ENCODE measurements at regions of chr2 and their contacts with region 1.

Region 1: DNA sequence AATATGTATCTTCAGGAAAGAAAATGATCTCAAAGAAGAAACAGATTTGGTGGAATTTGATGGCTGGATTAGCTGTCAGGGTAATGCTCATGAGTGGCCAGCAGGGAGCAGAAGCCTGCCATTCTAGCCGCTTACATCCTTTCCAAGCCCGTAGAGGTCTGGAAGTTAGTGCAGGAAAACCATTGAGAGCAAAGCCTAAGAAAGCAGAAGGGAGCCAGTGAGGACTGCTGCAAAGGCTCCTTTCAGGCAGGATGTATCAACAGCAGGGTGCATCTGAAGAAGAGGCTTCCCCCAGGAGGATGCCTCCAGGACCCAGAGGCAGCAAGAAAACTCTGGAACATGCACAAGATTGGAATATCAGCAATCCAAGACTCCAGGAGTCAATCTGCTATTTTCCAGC is 22.9 kb upstream of the LBH start:
- DNase-seq: peak; percentile 67
- ATAC-seq: peak; percentile 62
- H3K4me3 ChIP-seq: no peak overlapping the region
- H3K4me3 Mint-ChIP-seq: no peak overlapping the region
- H3K27ac ChIP-seq: no peak overlapping the region
- H3K27ac Mint-ChIP-seq: peak overlapping the region; percentile 22
- H3K4me1 ChIP-seq: peaks cover 9 to 18% of the 10 kb centered on the region in 2 donors
- H3K4me1 Mint-ChIP-seq: peaks cover 16% of the 10 kb centered on the region
- H3K27me3 ChIP-seq: no peaks in the 10 kb centered on the region
- H3K27me3 Mint-ChIP-seq: no peaks in the 10 kb centered on the region
- CTCF ChIP-seq: peak; percentile 88

Region 2: GRCh38 chr2:29966266-29966665 is 242.2 kb before region 1 on chr2:
- CTCF ChIA-PET with region 1: no interaction called
- POLR2A ChIA-PET with region 1: no interaction called
- intact Hi-C with region 1: no loop called
- DNase-seq: no peak
- ATAC-seq: no peak
- H3K4me3 ChIP-seq: no peak overlapping the region
- H3K4me3 Mint-ChIP-seq: no peak overlapping the region
- H3K27ac ChIP-seq: no peak overlapping the region
- H3K27ac Mint-ChIP-seq: no peak overlapping the region
- H3K4me1 ChIP-seq: no peaks in the 10 kb centered on the region
- H3K4me1 Mint-ChIP-seq: no peaks in the 10 kb centered on the region
- H3K27me3 ChIP-seq: peaks cover 0 to 11% (median 2%) of the 10 kb centered on the region in 4 experiments
- H3K27me3 Mint-ChIP-seq: peaks cover 18% of the 10 kb centered on the region
- CTCF ChIP-seq: no peak

Region 3: DNA sequence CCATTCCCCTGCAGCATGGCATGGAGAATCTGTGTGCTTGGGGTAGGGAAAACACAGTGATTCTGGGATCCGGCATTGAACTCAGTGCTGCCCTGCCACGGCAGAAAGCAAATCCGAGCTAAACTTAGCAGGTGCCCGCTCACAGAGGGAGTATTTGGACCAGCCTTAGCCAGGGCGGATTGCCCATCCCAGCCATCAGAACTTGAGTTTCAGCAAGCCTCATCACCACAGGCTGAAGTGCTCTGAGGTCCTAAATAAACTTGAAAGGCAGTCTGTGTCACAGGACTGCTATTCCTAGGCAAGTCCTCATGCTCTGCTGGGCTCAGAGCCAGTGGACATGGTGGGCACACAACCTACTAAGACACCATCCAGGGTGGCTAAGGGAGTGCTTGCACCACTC is 147.9 kb before region 1 on chr2:
- CTCF ChIA-PET with region 1: no interaction called
- POLR2A ChIA-PET with region 1: no interaction called
- intact Hi-C with region 1: no loop called
- DNase-seq: no peak
- ATAC-seq: no peak
- H3K4me3 ChIP-seq: no peak overlapping the region
- H3K4me3 Mint-ChIP-seq: no peak overlapping the region
- H3K27ac ChIP-seq: no peak overlapping the region
- H3K27ac Mint-ChIP-seq: no peak overlapping the region
- H3K4me1 ChIP-seq: no peaks in the 10 kb centered on the region
- H3K4me1 Mint-ChIP-seq: no peaks in the 10 kb centered on the region
- H3K27me3 ChIP-seq: peaks cover 0 to 8% (median 3%) of the 10 kb centered on the region in 4 experiments
- H3K27me3 Mint-ChIP-seq: peaks cover 56% of the 10 kb centered on the region
- CTCF ChIP-seq: no peak

Region 4: DNA sequence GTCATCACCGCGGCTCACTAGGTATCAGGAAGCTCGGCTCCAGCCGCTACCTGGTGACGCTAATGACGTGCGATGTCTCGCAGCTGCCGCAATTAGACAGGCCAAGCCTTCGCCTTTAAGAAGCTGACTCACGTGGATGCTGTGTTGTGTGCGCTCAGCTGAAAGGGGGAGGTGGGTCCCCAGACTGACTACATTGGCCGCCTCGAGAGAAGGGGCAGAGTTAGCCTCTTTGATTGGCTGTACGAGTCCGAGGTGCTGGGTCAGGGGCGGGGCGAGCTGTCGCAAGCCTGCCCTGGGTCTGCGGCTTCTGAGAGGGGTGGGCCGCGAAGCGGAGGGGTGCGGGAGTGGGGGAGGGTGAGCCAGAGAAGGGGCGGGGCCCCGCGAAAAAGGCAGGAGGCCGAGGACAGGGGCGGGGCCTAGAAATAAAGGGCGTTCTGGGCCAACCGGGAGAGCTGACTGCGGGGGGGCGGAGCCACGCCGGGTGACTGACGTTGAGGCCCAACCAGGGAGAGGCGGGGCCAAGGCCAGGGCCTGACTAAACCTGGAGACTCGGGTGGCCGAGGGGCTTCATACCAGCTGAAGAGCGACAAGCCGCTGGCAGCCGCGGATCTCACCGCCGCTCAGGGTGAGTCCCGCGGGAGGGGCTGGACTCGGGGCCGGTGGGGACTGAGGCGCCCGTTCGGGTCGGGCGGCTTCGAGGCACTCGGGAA is 61.9 kb before region 1 on chr2 and contains the start of gene YPEL5:
- CTCF ChIA-PET with region 1: interaction called, 13 read pairs
- POLR2A ChIA-PET with region 1: no interaction called
- intact Hi-C with region 1: no loop called
- DNase-seq: peak; percentile 100
- ATAC-seq: peak; percentile 81
- H3K4me3 ChIP-seq: peak within 1 kb of the TSS; percentile 87 to 98 (median 94)
- H3K4me3 Mint-ChIP-seq: peak within 1 kb of the TSS; percentile 90
- H3K27ac ChIP-seq: peak within 1 kb of the TSS; percentile 99
- H3K27ac Mint-ChIP-seq: peak within 1 kb of the TSS; percentile 100
- H3K4me1 ChIP-seq: peaks cover 38 to 46% of the 10 kb centered on the region in 2 donors
- H3K4me1 Mint-ChIP-seq: peaks cover 45% of the 10 kb centered on the region
- H3K27me3 ChIP-seq: no peaks in the 10 kb centered on the region
- H3K27me3 Mint-ChIP-seq: no peaks in the 10 kb centered on the region
- CTCF ChIP-seq: no peak
- total RNA-seq, gene YPEL5: 115 and 117 TPM in 2 replicates

Region 5: DNA sequence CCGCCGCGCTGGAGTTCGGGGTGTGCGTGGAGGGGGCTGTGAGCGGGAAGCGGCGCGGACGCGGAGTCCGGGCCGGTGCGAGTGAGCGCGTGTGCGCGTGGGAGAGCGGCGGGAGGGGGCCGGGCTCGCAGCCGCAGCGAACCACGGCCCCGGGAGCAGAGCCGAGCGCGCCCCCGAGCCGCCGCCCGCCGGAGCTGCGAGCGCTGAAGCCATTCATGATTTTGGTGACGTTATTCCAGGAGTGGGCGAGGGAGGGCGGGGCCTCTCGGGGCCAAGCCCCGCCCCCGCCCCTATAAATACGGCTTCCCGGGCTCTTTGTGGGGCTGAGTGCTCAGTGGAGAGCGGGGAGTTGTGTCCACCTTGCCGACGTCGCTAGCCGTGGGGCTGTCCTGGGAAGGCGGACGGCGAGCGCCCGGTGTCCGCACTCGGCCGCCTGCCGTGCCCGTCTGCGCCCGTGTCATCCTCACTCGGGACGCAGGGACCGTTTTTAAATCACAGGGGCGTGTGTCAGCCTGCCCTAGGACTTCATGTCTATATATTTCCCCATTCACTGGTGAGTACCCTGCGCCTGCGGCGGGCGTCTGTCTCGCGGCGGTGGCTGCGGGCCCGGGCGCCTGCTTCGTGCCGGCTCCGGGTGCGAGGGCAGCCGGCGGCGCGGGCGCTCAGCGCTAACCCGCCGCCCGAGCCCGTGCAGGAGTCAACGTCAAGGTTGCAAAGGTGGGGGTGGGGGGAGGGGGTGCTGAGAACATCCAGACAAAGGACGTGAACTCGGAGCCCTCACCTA is 23.0 kb after region 1 on chr2 and contains the start of gene LBH:
- CTCF ChIA-PET with region 1: interaction called, 134 read pairs
- POLR2A ChIA-PET with region 1: interaction called, 13 read pairs
- intact Hi-C with region 1: loop called (anchors 2 kb)
- DNase-seq: peak; percentile 97
- ATAC-seq: peak; percentile 56
- H3K4me3 ChIP-seq: peak within 1 kb of the TSS; percentile 84 to 94 (median 93)
- H3K4me3 Mint-ChIP-seq: peak within 1 kb of the TSS; percentile 80
- H3K27ac ChIP-seq: peak within 1 kb of the TSS; percentile 93 to 94
- H3K27ac Mint-ChIP-seq: peak within 1 kb of the TSS; percentile 98
- H3K4me1 ChIP-seq: peaks cover 38 to 48% of the 10 kb centered on the region in 2 donors
- H3K4me1 Mint-ChIP-seq: peaks cover 47% of the 10 kb centered on the region
- H3K27me3 ChIP-seq: no peaks in the 10 kb centered on the region
- H3K27me3 Mint-ChIP-seq: no peaks in the 10 kb centered on the region
- CTCF ChIP-seq: no peak
- total RNA-seq, gene LBH: 197 and 201 TPM in 2 replicates

Region 6: GRCh38 chr2:30287857-30288513 is 79.5 kb after region 1 on chr2:
- CTCF ChIA-PET with region 1: interaction called, 18 read pairs
- POLR2A ChIA-PET with region 1: no interaction called
- intact Hi-C with region 1: no loop called
- DNase-seq: peak; percentile 77
- ATAC-seq: peak; percentile 85
- H3K4me3 ChIP-seq: peak overlapping the region; percentile 19 to 69 (median 34)
- H3K4me3 Mint-ChIP-seq: peak overlapping the region; percentile 58
- H3K27ac ChIP-seq: peak overlapping the region; percentile 81 to 86
- H3K27ac Mint-ChIP-seq: peak overlapping the region; percentile 84
- H3K4me1 ChIP-seq: peaks cover 83 to 91% of the 10 kb centered on the region in 2 donors
- H3K4me1 Mint-ChIP-seq: peaks cover 82% of the 10 kb centered on the region
- H3K27me3 ChIP-seq: no peaks in the 10 kb centered on the region
- H3K27me3 Mint-ChIP-seq: no peaks in the 10 kb centered on the region
- CTCF ChIP-seq: no peak

Region 7: DNA sequence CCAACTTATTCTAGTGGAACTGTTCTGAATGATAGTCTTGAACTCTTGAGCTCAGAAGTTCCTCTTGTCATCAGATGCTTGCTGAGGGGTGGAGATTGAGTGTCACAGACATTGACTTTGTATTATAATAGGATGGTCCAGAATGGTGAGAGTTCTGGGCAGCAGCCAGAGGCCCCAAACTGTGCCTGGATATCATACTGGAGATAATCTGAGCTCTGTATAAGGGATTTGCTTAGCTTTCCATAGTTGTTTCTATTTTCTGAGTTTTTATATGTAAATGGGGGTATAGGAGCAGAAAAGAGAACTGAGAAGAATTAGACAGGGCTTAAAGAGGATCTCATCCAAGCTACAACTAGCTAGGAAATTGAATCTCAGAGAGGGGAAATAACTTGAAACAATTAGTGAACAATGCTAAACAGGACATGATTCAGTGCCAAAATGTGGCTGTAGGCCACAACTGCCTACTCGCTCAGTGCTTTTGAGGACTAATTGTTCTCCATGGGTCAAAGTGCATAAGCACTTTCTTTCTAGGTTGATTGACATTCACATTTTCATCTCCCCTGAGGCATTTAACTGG is 228.5 kb after region 1 on chr2:
- CTCF ChIA-PET with region 1: interaction called, 15 read pairs
- POLR2A ChIA-PET with region 1: no interaction called
- intact Hi-C with region 1: no loop called
- DNase-seq: peak; percentile 68
- ATAC-seq: peak; percentile 83
- H3K4me3 ChIP-seq: no peak overlapping the region
- H3K4me3 Mint-ChIP-seq: peak overlapping the region; percentile 66
- H3K27ac ChIP-seq: peak overlapping the region; percentile 70 to 78
- H3K27ac Mint-ChIP-seq: peak overlapping the region; percentile 90
- H3K4me1 ChIP-seq: peaks cover 28 to 39% of the 10 kb centered on the region in 2 donors
- H3K4me1 Mint-ChIP-seq: peaks cover 32% of the 10 kb centered on the region
- H3K27me3 ChIP-seq: no peaks in the 10 kb centered on the region
- H3K27me3 Mint-ChIP-seq: no peaks in the 10 kb centered on the region
- CTCF ChIP-seq: no peak

Region 8: GRCh38 chr2:30503007-30503694 is 294.7 kb after region 1 on chr2:
- CTCF ChIA-PET with region 1: interaction called, 16 read pairs
- POLR2A ChIA-PET with region 1: no interaction called
- intact Hi-C with region 1: no loop called
- DNase-seq: no peak
- ATAC-seq: peak; percentile 60
- H3K4me3 ChIP-seq: peak overlapping the region in 1 of 5 experiments; percentile 34
- H3K4me3 Mint-ChIP-seq: peak overlapping the region; percentile 73
- H3K27ac ChIP-seq: peak overlapping the region; percentile 48 to 76
- H3K27ac Mint-ChIP-seq: peak overlapping the region; percentile 93
- H3K4me1 ChIP-seq: peaks cover 28 to 37% of the 10 kb centered on the region in 2 donors
- H3K4me1 Mint-ChIP-seq: peaks cover 48% of the 10 kb centered on the region
- H3K27me3 ChIP-seq: no peaks in the 10 kb centered on the region
- H3K27me3 Mint-ChIP-seq: no peaks in the 10 kb centered on the region
- CTCF ChIP-seq: peak; percentile 46

Measured in B cell (primary cell).